Gastrocnemius medialis (tissue), 4 donors: ENCODE measurements at regions of chr17 and their contacts with region 1.

Region 1: GRCh38 chr17:65231662-65232335 is 94.6 kb downstream of the RGS9 start:
- DNase-seq: peak in 1 of 2 donors; percentile 26
- ATAC-seq: peak; percentile 64 to 66
- H3K4me3 ChIP-seq: no peak overlapping the region
- H3K27ac ChIP-seq: no peak overlapping the region
- H3K4me1 ChIP-seq: no peaks in the 10 kb centered on the region
- H3K27me3 ChIP-seq: no peaks in the 10 kb centered on the region
- CTCF ChIP-seq: peak; percentile 34 to 51 (median 47)
- POLR2A ChIP-seq: no peak

Region 2: DNA sequence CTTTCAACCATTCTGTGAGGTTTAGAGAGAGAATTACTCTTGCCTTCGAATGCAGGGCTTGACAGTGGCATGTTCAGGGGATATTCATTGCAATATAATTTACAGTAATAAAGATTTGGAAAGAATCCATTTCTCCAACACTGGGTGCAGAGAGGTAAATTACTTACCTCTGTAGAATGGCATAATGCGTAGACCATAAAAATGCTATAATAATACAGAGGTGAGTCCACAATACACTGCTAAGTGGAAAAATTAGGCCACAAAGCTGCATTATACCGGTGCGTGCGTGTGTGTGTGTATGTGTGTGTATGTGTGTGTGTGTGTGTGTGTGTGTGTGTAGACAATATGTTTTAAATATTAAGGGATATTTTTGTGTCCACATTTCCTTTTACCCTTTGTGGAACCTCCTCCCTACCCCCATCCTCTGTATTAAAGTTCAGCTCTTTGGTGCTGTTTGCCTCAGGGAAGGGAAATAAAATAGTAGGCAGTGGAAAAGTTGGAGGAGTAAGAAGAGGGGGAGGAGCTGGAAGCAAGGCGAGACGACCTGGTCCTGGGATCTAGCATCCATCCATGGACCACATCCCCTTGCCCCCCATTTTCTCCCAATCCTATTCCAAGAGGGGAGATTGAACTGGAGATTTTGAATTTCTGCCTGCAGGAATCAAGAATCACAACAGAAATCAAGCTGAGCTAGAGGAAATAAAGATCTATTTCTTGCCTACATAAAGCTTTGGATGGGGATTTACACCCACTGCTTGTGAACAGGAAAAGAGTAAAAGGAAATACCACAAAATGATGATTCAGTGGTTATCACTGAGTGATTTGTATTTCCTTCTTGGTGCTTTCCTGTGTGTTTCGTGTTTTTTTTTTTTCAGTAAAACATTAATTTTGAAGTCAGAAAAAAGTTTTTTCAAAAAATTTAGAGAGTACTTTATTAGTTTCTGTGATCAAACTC is 30.2 kb after region 1 on chr17:
- in situ Hi-C with region 1: no loop called
- intact Hi-C with region 1: no loop called
- DNase-seq: no peak
- ATAC-seq: no peak
- H3K4me3 ChIP-seq: no peak overlapping the region
- H3K27ac ChIP-seq: no peak overlapping the region
- H3K4me1 ChIP-seq: no peaks in the 10 kb centered on the region
- H3K27me3 ChIP-seq: no peaks in the 10 kb centered on the region
- CTCF ChIP-seq: no peak
- POLR2A ChIP-seq: no peak

Region 3: DNA sequence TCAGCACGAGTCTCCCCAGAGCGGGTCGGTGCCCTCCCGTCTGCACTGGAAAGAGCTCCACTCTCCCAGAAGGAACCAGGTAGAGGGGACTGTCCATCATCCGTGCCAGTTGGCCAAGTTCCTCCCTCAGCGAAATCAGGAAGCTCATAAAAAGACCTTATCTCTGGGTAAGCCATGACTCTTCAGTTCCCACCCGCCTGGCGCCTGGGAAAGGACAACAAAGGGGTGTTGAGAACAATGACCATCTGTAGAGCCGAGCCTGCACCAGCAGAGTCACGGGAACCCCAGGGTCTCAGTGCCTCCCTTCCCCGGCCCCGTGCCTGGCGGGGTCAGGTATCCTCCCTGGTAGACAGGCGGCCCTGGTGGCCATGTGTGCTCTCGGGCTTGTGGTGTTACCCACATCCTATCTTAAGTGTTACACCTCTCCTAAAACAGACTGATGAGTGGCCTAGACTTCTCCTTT is 138.9 kb after region 1 on chr17:
- in situ Hi-C with region 1: no loop called
- intact Hi-C with region 1: no loop called
- DNase-seq: no peak
- ATAC-seq: no peak
- H3K4me3 ChIP-seq: no peak overlapping the region
- H3K27ac ChIP-seq: no peak overlapping the region
- H3K4me1 ChIP-seq: peaks cover 0 to 6% of the 10 kb centered on the region in 2 donors
- H3K27me3 ChIP-seq: no peaks in the 10 kb centered on the region
- CTCF ChIP-seq: no peak
- POLR2A ChIP-seq: no peak

Region 4: GRCh38 chr17:65797809-65798208 is 566.0 kb after region 1 on chr17:
- in situ Hi-C with region 1: no loop called
- intact Hi-C with region 1: no loop called
- DNase-seq: no peak
- ATAC-seq: no peak
- H3K4me3 ChIP-seq: no peak overlapping the region
- H3K27ac ChIP-seq: no peak overlapping the region
- H3K4me1 ChIP-seq: no peaks in the 10 kb centered on the region
- H3K27me3 ChIP-seq: no peaks in the 10 kb centered on the region
- CTCF ChIP-seq: peak in 1 of 5 experiments; percentile 16
- POLR2A ChIP-seq: no peak

Region 5: DNA sequence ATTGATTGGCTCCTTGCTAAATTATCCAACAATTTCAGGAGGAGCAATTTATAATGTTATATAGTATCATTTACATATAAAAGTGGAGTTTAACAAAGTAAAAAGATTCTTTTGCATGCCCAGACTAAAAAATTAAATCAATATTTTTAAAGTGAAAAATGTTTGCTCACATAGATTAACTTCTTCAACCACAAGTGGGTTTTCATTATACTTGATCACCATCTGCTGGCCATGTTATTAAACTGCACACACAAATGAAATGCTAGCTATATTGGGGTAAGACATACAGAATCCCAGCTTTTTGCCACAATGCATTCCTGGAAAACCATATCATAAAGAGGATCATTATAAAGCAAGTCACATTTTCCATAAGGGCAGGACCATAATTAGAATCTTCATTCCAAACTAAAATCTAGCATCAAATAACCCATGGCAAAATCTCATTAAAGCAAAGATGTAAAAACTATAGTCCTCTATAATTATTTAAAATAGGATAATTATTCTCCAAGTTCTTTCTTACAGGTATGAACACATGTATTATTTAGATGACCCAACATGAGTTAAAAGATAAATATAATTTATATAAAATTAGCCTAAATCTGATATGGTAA is 933.8 kb after region 1 on chr17:
- in situ Hi-C with region 1: loop called in 2 of 4 experiments (anchors 5 to 10 kb)
- intact Hi-C with region 1: loop called (anchors 1 kb)
- DNase-seq: no peak
- ATAC-seq: no peak
- H3K4me3 ChIP-seq: no peak overlapping the region
- H3K27ac ChIP-seq: no peak overlapping the region
- H3K4me1 ChIP-seq: peaks cover 0 to 3% of the 10 kb centered on the region in 2 donors
- H3K27me3 ChIP-seq: no peaks in the 10 kb centered on the region
- CTCF ChIP-seq: peak; percentile 57 to 66 (median 63)
- POLR2A ChIP-seq: no peak